Cardiac septum (tissue), 1 donor: ENCODE measurements at regions of chr17 and their contacts with region 1.

Region 1: GRCh38 chr17:58710936-58711775 is 18.8 kb downstream of the RAD51C start:
- DNase-seq: no peak

Region 2: GRCh38 chr17:59004338-59005111 is 293.4 kb after region 1 on chr17:
- intact Hi-C with region 1: loop called (anchors 2 kb)
- DNase-seq: no peak